MCF 10A (cell line): ENCODE measurements at regions of chr7 and their contacts with region 1.

Region 1: GRCh38 chr7:31744294-31744874 is 57.4 kb downstream of the PPP1R17 start:
- DNase-seq: peak; percentile 78
- H3K4me3 Mint-ChIP-seq: no peak overlapping the region
- H3K27ac Mint-ChIP-seq: no peak overlapping the region
- H3K4me1 Mint-ChIP-seq: peaks cover 5% of the 10 kb centered on the region
- H3K27me3 Mint-ChIP-seq: peaks cover 39% of the 10 kb centered on the region
- CTCF ChIP-seq: peak; percentile 92

Region 2: DNA sequence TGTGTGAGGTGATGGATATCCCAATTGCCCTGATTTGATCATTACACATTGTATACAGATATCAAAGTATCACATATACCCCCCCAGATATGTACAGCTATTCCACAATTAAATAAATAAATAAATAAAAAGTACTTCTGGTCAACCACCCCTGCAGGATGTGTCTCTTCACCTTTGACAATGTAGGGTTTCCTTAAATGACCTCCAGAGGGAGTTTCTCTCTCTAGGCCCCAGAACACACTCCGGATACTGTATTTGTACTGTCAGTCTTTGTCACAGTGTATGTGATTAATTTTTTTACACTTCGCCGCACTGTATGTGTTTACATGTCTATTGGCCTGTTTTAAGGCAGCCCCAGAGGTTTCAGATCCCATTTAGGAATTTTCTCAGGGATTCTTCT is 568.7 kb before region 1 on chr7:
- CTCF ChIA-PET with region 1: no interaction called
- POLR2A ChIA-PET with region 1: no interaction called
- intact Hi-C with region 1: no loop called
- DNase-seq: peak; percentile 19
- H3K4me3 Mint-ChIP-seq: no peak overlapping the region
- H3K27ac Mint-ChIP-seq: no peak overlapping the region
- H3K4me1 Mint-ChIP-seq: no peaks in the 10 kb centered on the region
- H3K27me3 Mint-ChIP-seq: peaks cover 63% of the 10 kb centered on the region
- CTCF ChIP-seq: peak; percentile 14

Region 3: GRCh38 chr7:31710171-31710570 is 34.2 kb before region 1 on chr7:
- CTCF ChIA-PET with region 1: no interaction called
- POLR2A ChIA-PET with region 1: no interaction called
- intact Hi-C with region 1: no loop called
- DNase-seq: no peak
- H3K4me3 Mint-ChIP-seq: no peak overlapping the region
- H3K27ac Mint-ChIP-seq: no peak overlapping the region
- H3K4me1 Mint-ChIP-seq: no peaks in the 10 kb centered on the region
- H3K27me3 Mint-ChIP-seq: peaks cover 15% of the 10 kb centered on the region
- CTCF ChIP-seq: no peak

Region 4: GRCh38 chr7:31729198-31729781 is 15.1 kb before region 1 on chr7:
- CTCF ChIA-PET with region 1: interaction called, 17 read pairs
- POLR2A ChIA-PET with region 1: no interaction called
- intact Hi-C with region 1: no loop called
- DNase-seq: no peak
- H3K4me3 Mint-ChIP-seq: no peak overlapping the region
- H3K27ac Mint-ChIP-seq: no peak overlapping the region
- H3K4me1 Mint-ChIP-seq: peaks cover 1% of the 10 kb centered on the region
- H3K27me3 Mint-ChIP-seq: no peaks in the 10 kb centered on the region
- CTCF ChIP-seq: no peak

Region 5: GRCh38 chr7:31758755-31759154 is 14.4 kb after region 1 on chr7:
- CTCF ChIA-PET with region 1: interaction called, 12 read pairs
- POLR2A ChIA-PET with region 1: no interaction called
- intact Hi-C with region 1: no loop called
- DNase-seq: no peak
- H3K4me3 Mint-ChIP-seq: no peak overlapping the region
- H3K27ac Mint-ChIP-seq: no peak overlapping the region
- H3K4me1 Mint-ChIP-seq: no peaks in the 10 kb centered on the region
- H3K27me3 Mint-ChIP-seq: no peaks in the 10 kb centered on the region
- CTCF ChIP-seq: no peak

Region 6: GRCh38 chr7:32043714-32044113 is 299.3 kb after region 1 on chr7:
- CTCF ChIA-PET with region 1: no interaction called
- POLR2A ChIA-PET with region 1: no interaction called
- intact Hi-C with region 1: loop called (anchors 10 kb)
- DNase-seq: peak; percentile 57
- H3K4me3 Mint-ChIP-seq: no peak overlapping the region
- H3K27ac Mint-ChIP-seq: no peak overlapping the region
- H3K4me1 Mint-ChIP-seq: no peaks in the 10 kb centered on the region
- H3K27me3 Mint-ChIP-seq: no peaks in the 10 kb centered on the region
- CTCF ChIP-seq: no peak

Region 7: DNA sequence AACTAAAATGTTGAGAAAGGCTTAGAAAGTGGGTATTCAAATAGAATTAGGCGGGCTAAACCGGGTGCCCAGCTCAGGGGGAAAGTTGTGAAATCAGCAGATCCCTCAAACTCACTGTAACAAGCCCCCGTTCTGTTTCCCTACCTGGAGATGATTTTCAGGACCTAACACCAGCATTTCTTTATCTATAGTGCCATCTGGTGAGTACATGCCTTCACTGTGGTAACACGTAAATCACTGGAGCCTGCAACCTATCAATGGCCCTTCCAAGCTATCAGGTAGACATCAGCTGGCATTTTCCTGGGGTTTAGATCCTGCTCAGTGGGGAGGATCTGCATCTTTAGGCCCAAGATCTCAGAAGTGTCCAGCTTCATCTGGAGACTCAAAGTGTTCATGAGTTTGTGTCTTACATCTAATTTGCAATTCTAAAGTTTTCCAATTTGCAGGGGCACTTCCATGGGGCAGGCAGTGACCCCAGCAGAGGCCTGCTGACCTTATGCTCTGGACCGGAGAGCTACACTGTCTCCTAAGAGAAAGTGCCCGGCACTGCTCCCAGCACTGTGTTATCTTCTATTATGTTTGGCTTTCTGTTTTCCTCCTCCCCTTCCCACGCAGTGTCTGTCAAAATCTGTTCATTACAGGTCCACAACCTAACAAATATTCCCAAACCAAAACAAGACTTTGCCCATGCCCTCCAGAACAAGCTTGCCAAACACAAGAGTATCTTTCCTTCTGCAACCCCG is 613.3 kb after region 1 on chr7:
- CTCF ChIA-PET with region 1: interaction called, 29 read pairs
- POLR2A ChIA-PET with region 1: interaction called, 4 read pairs
- intact Hi-C with region 1: loop called (anchors 2 kb)
- DNase-seq: peak; percentile 32
- H3K4me3 Mint-ChIP-seq: no peak overlapping the region
- H3K27ac Mint-ChIP-seq: no peak overlapping the region
- H3K4me1 Mint-ChIP-seq: no peaks in the 10 kb centered on the region
- H3K27me3 Mint-ChIP-seq: peaks cover 46% of the 10 kb centered on the region
- CTCF ChIP-seq: peak; percentile 39

Region 8: GRCh38 chr7:32479574-32480200 is 735.3 kb after region 1 on chr7:
- CTCF ChIA-PET with region 1: interaction called, 6 read pairs
- POLR2A ChIA-PET with region 1: no interaction called
- intact Hi-C with region 1: loop called (anchors 1 kb)
- DNase-seq: peak; percentile 63
- H3K4me3 Mint-ChIP-seq: no peak overlapping the region
- H3K27ac Mint-ChIP-seq: no peak overlapping the region
- H3K4me1 Mint-ChIP-seq: peaks cover 9% of the 10 kb centered on the region
- H3K27me3 Mint-ChIP-seq: no peaks in the 10 kb centered on the region
- CTCF ChIP-seq: peak; percentile 85